Mammary epithelial cell (primary cell): ENCODE measurements at regions of chr6 and their contacts with region 1.

Region 1: GRCh38 chr6:39980839-39981580 is 46.7 kb upstream of the MOCS1 start:
- DNase-seq: peak; percentile 31
- H3K4me3 ChIP-seq: no peak overlapping the region
- H3K27ac ChIP-seq: no peak overlapping the region
- H3K4me1 ChIP-seq: no peaks in the 10 kb centered on the region
- H3K27me3 ChIP-seq: no peaks in the 10 kb centered on the region
- CTCF ChIP-seq: peak; percentile 47 to 66

Region 2: GRCh38 chr6:39865011-39865888 is 115.8 kb before region 1 on chr6:
- CTCF ChIA-PET with region 1: no interaction called
- dilution Hi-C with region 1: no loop called
- in situ Hi-C with region 1: no loop called
- intact Hi-C with region 1: loop called (anchors 5 kb)
- DNase-seq: peak; percentile 31
- H3K4me3 ChIP-seq: no peak overlapping the region
- H3K27ac ChIP-seq: no peak overlapping the region
- H3K4me1 ChIP-seq: no peaks in the 10 kb centered on the region
- H3K27me3 ChIP-seq: no peaks in the 10 kb centered on the region
- CTCF ChIP-seq: peak; percentile 69 to 82

Region 3: GRCh38 chr6:39952167-39952566 is 28.8 kb before region 1 on chr6:
- CTCF ChIA-PET with region 1: no interaction called
- dilution Hi-C with region 1: no loop called
- in situ Hi-C with region 1: no loop called
- intact Hi-C with region 1: no loop called
- DNase-seq: no peak
- H3K4me3 ChIP-seq: no peak overlapping the region
- H3K27ac ChIP-seq: no peak overlapping the region
- H3K4me1 ChIP-seq: peaks cover 6% of the 10 kb centered on the region
- H3K27me3 ChIP-seq: no peaks in the 10 kb centered on the region
- CTCF ChIP-seq: no peak

Region 4: GRCh38 chr6:40308533-40309306 is 327.7 kb after region 1 on chr6:
- CTCF ChIA-PET with region 1: interaction called, 4 read pairs
- dilution Hi-C with region 1: no loop called
- in situ Hi-C with region 1: loop called (anchors 5 kb)
- intact Hi-C with region 1: loop called (anchors 1 kb)
- DNase-seq: peak; percentile 45
- H3K4me3 ChIP-seq: no peak overlapping the region
- H3K27ac ChIP-seq: no peak overlapping the region
- H3K4me1 ChIP-seq: peaks cover 3% of the 10 kb centered on the region
- H3K27me3 ChIP-seq: no peaks in the 10 kb centered on the region
- CTCF ChIP-seq: peak; percentile 86 to 95

Region 5: GRCh38 chr6:40845553-40845952 is 864.5 kb after region 1 on chr6:
- CTCF ChIA-PET with region 1: no interaction called
- dilution Hi-C with region 1: no loop called
- in situ Hi-C with region 1: no loop called
- intact Hi-C with region 1: loop called (anchors 5 kb)
- DNase-seq: peak; percentile 30
- H3K4me3 ChIP-seq: no peak overlapping the region
- H3K27ac ChIP-seq: no peak overlapping the region
- H3K4me1 ChIP-seq: no peaks in the 10 kb centered on the region
- H3K27me3 ChIP-seq: peaks cover 5% of the 10 kb centered on the region
- CTCF ChIP-seq: peak; percentile 62 to 74